Caco-2 (cell line): ENCODE measurements at regions of chr5 and their contacts with region 1.

Region 1: DNA sequence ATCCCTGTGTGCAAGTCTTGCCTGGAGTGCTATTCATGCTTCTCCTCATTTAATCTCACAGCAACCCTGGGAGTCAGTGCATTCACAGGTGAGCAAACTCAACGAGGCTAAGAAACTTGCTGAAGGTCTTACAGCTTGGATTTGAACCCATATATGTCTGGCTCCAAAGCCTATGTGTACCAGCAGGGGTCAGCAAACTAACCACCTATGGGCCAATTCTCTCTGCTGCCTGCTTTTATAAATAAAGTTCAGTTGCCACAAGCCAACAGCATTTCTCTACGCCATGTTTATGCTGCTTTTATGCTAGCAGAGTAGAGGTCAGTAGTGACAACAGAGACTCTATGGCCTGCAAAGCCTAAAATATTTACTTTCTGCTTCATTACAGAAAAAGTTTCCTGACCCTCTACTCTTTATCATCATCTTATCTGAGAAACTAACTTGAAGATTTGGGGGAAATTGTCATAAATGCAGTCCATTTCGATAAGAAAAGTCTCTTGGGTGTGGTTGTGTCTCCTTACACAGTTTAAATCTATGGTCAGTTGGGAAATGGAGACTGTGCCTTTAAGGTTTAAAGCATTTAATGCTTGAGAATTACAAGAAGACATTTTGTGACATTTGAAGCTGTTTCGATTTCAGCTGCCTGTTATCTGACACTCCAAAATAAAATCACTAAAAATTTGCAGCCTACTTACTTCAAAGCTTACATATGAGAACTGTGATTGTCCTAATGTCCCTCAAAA is 137.7 kb downstream of the PRELID2 start:
- DNase-seq: peak in 1 of 2 experiments; percentile 40
- H3K4me3 ChIP-seq: no peak overlapping the region
- H3K4me3 Mint-ChIP-seq: no peak overlapping the region
- H3K27ac Mint-ChIP-seq: no peak overlapping the region
- H3K4me1 ChIP-seq: no peaks in the 10 kb centered on the region
- H3K4me1 Mint-ChIP-seq: no peaks in the 10 kb centered on the region
- H3K27me3 ChIP-seq: no peaks in the 10 kb centered on the region
- H3K27me3 Mint-ChIP-seq: no peaks in the 10 kb centered on the region
- CTCF ChIP-seq: peak; percentile 44 to 64

Region 2: GRCh38 chr5:145718956-145719355 is 21.5 kb after region 1 on chr5:
- CTCF ChIA-PET with region 1: interaction called, 3 read pairs
- POLR2A ChIA-PET with region 1: no interaction called
- intact Hi-C with region 1: loop called (anchors 2 kb)
- DNase-seq: peak in 1 of 2 experiments; percentile 22
- H3K4me3 ChIP-seq: no peak overlapping the region
- H3K4me3 Mint-ChIP-seq: no peak overlapping the region
- H3K27ac Mint-ChIP-seq: no peak overlapping the region
- H3K4me1 ChIP-seq: no peaks in the 10 kb centered on the region
- H3K4me1 Mint-ChIP-seq: no peaks in the 10 kb centered on the region
- H3K27me3 ChIP-seq: no peaks in the 10 kb centered on the region
- H3K27me3 Mint-ChIP-seq: no peaks in the 10 kb centered on the region
- CTCF ChIP-seq: peak; percentile 48 to 51

Region 3: DNA sequence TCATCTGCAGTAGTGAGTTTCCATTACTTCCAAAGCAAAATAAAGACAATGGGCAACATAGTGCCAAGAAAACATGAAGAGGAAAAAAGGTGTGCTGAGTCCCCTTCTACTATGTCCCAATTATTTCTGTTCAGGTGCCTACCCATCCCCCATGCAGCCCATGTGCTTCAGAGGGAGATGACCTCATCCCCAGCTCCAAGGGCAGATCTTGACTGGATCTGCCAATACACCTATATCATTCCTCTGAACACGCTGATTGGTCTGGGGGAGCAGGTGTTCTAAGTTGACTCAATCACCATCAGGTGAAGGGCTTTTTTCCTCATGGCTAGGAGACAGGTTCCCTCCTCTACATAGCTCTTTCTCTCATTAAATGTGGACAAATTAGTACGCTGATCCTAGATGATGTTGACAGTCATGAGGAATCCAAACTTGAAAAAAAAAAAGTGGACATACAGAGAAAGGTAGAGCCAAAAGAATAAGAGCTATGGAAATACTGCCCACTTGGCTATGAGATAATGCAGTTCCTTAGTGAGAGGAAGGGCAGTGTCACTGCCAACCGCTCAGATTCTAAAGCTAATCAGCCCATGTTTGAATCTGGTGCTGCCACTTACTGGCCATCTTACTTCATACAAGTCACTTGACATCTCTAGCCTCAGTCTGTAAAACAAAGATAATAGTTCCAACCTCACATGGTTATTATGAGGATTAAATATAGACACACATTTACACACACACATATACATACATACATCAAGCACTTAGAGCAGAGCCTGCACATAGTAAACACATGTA is 114.6 kb after region 1 on chr5:
- CTCF ChIA-PET with region 1: interaction called, 3 read pairs
- POLR2A ChIA-PET with region 1: interaction called, 6 read pairs
- intact Hi-C with region 1: loop called (anchors 1 kb)
- DNase-seq: peak in 1 of 2 experiments; percentile 14
- H3K4me3 ChIP-seq: no peak overlapping the region
- H3K4me3 Mint-ChIP-seq: no peak overlapping the region
- H3K27ac Mint-ChIP-seq: no peak overlapping the region
- H3K4me1 ChIP-seq: no peaks in the 10 kb centered on the region
- H3K4me1 Mint-ChIP-seq: no peaks in the 10 kb centered on the region
- H3K27me3 ChIP-seq: no peaks in the 10 kb centered on the region
- H3K27me3 Mint-ChIP-seq: no peaks in the 10 kb centered on the region
- CTCF ChIP-seq: no peak

Region 4: DNA sequence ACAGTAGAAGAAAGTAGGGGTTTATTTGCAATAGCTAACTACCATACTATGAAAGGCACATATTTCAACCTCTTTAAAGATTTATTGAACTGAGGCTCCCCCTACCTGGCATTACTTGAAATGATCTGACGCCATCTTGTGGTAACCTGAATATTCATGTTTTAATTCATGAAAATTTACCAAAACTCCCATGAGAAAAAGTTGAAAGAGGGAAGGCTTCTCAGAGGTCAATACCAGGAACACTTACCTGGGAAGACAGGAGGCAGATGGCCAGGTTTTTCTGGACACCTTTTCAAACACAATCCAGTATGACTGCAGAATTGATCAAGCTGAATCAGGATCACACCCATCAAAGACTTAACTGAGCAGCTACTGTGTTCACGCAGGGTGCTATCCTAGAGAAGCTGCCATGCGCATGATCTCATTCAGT is 128.3 kb after region 1 on chr5:
- CTCF ChIA-PET with region 1: no interaction called
- POLR2A ChIA-PET with region 1: no interaction called
- intact Hi-C with region 1: loop called (anchors 1 kb)
- DNase-seq: peak in 1 of 2 experiments; percentile 45
- H3K4me3 ChIP-seq: no peak overlapping the region
- H3K4me3 Mint-ChIP-seq: no peak overlapping the region
- H3K27ac Mint-ChIP-seq: no peak overlapping the region
- H3K4me1 ChIP-seq: no peaks in the 10 kb centered on the region
- H3K4me1 Mint-ChIP-seq: peaks cover 16% of the 10 kb centered on the region
- H3K27me3 ChIP-seq: no peaks in the 10 kb centered on the region
- H3K27me3 Mint-ChIP-seq: no peaks in the 10 kb centered on the region
- CTCF ChIP-seq: peak; percentile 77 to 94